ENCODE measurements at regions of chr4 and their contacts with region 1.

Region 1: DNA sequence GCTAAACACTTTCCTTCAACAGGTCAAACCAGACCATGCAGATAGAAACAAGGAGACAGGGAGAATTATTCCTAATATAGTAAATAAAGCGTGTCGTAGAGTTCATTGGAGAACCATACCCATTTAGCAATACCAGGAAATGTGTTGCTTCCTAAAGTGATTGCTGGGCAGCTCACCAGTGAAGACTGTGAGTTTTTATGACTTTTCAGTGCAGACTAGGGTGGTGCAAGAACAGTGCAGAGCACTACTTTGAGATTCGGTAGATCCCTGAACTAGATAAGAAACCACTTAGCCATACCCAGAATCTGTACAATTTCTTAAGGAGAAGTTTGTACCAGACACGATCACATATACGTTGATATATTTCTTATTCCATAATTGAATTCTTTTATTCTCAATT is 87.4 kb downstream of the EMCN start:
- DNase-seq: no peak
- H3K4me3 ChIP-seq: no peak overlapping the region
- H3K4me3 Mint-ChIP-seq: no peak overlapping the region
- H3K27ac ChIP-seq: no peak overlapping the region
- H3K27ac Mint-ChIP-seq: no peak overlapping the region
- H3K4me1 ChIP-seq: no peaks in the 10 kb centered on the region
- H3K4me1 Mint-ChIP-seq: no peaks in the 10 kb centered on the region
- H3K27me3 ChIP-seq: no peaks in the 10 kb centered on the region
- H3K27me3 Mint-ChIP-seq: no peaks in the 10 kb centered on the region
- CTCF ChIP-seq: no peak

Region 2: GRCh38 chr4:99816545-99817308 is 613.7 kb before region 1 on chr4 and contains the start of gene DAPP1:
- intact Hi-C with region 1: no loop called
- DNase-seq: peak; percentile 75 to 91 (median 84)
- H3K4me3 ChIP-seq: peak within 1 kb of the TSS; percentile 79 to 99 (median 90)
- H3K4me3 Mint-ChIP-seq: peak within 1 kb of the TSS; percentile 92 to 99
- H3K27ac ChIP-seq: peak within 1 kb of the TSS; percentile 85 to 94
- H3K27ac Mint-ChIP-seq: peak within 1 kb of the TSS; percentile 94 to 99 (median 96)
- H3K4me1 ChIP-seq: peaks cover 66 to 72% of the 10 kb centered on the region in 2 donors
- H3K4me1 Mint-ChIP-seq: peaks cover 66% of the 10 kb centered on the region
- H3K27me3 ChIP-seq: no peaks in the 10 kb centered on the region
- H3K27me3 Mint-ChIP-seq: no peaks in the 10 kb centered on the region
- CTCF ChIP-seq: no peak
- polyA plus RNA-seq, gene DAPP1: 63.1 to 125 (median 87.2) TPM

Region 3: DNA sequence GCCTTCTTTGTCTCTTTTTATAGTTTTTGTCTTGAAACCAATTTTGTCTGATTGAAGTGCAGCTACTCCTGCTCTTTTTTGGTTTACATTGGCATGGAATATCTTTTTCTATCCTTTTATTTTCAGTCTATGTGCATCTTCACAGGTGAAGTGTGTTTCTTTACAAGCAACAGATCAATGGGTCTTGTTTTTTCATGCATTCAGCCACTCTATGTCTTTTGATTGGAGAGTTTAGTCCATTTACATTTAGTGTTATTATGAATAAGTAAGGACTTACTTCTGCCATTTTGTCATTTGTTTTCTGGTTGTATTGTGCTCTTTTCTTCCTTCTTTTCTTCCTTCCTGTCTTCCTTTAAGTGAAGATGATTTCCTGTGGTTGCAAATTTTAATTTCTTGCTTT is 1690.4 kb after region 1 on chr4:
- intact Hi-C with region 1: loop called in 1 of 2 experiments (anchors 10 kb)
- DNase-seq: no peak
- H3K4me3 ChIP-seq: no peak overlapping the region
- H3K4me3 Mint-ChIP-seq: no peak overlapping the region
- H3K27ac ChIP-seq: no peak overlapping the region
- H3K27ac Mint-ChIP-seq: no peak overlapping the region
- H3K4me1 ChIP-seq: no peaks in the 10 kb centered on the region
- H3K4me1 Mint-ChIP-seq: no peaks in the 10 kb centered on the region
- H3K27me3 ChIP-seq: no peaks in the 10 kb centered on the region
- H3K27me3 Mint-ChIP-seq: no peaks in the 10 kb centered on the region
- CTCF ChIP-seq: no peak

Measured in CD14-positive monocyte (primary cell).